Naive thymus-derived CD4-positive, alpha-beta T cell (primary cell): ENCODE measurements at regions of chr9 and their contacts with region 1.

Region 1: GRCh38 chr9:69745716-69746437 is 13.9 kb downstream of the PTAR1 start:
- DNase-seq: no peak
- ATAC-seq: peak; percentile 50
- H3K4me3 ChIP-seq: no peak overlapping the region
- H3K4me3 Mint-ChIP-seq: peak overlapping the region in 1 of 10 donors; percentile 15
- H3K27ac ChIP-seq: no peak overlapping the region
- H3K27ac Mint-ChIP-seq: peak overlapping the region in 6 of 9 donors; percentile 2 to 79 (median 40)
- H3K4me1 ChIP-seq: no peaks in the 10 kb centered on the region
- H3K4me1 Mint-ChIP-seq: peaks cover 28 to 71% (median 55%) of the 10 kb centered on the region in 7 donors
- H3K27me3 ChIP-seq: no peaks in the 10 kb centered on the region
- H3K27me3 Mint-ChIP-seq: no peaks in the 10 kb centered on the region

Region 2: DNA sequence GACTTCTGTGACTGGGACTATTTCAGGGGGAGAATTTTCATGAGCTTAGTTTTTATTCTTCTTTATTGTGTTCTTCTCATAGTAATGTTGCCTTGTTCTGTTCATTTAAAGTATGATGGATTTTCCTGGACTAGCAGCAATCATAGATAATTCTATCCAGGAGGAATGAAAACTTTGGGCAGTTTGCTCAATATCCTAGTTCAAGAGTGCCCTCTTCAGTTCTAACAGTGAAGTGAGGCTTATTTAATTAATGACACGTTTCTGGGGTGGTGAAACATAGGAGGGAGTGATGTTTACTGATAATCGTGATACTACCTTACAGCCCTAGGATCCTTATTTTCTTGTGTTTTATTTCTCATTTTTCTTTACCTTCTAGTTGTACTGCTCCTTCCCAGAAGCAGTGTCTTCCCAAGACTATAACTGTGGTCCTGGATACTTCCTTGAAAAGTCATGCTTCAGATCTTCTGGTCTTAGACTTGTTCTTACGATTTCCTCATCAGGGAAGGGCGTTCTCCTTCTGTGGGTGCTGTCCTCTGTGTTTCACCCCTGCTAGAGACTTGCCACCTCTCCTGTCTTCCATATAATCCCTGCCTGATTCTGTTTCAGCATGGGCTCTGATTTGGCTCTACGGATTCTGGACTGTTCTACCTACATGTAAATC is 132.1 kb after region 1 on chr9:
- CTCF ChIA-PET with region 1: no interaction called
- POLR2A ChIA-PET with region 1: no interaction called
- intact Hi-C with region 1: loop called (anchors 5 to 10 kb)
- DNase-seq: peak in 5 of 9 donors; percentile 2 to 25 (median 6)
- ATAC-seq: no peak
- H3K4me3 ChIP-seq: no peak overlapping the region
- H3K4me3 Mint-ChIP-seq: no peak overlapping the region
- H3K27ac ChIP-seq: no peak overlapping the region
- H3K27ac Mint-ChIP-seq: no peak overlapping the region
- H3K4me1 ChIP-seq: no peaks in the 10 kb centered on the region
- H3K4me1 Mint-ChIP-seq: no peaks in the 10 kb centered on the region
- H3K27me3 ChIP-seq: no peaks in the 10 kb centered on the region
- H3K27me3 Mint-ChIP-seq: peaks cover 0 to 37% (median 2%) of the 10 kb centered on the region in 5 donors

Region 3: GRCh38 chr9:69882998-69883565 is 137.2 kb after region 1 on chr9:
- CTCF ChIA-PET with region 1: no interaction called
- POLR2A ChIA-PET with region 1: no interaction called
- intact Hi-C with region 1: loop called (anchors 5 to 10 kb)
- DNase-seq: no peak
- ATAC-seq: no peak
- H3K4me3 ChIP-seq: no peak overlapping the region
- H3K4me3 Mint-ChIP-seq: no peak overlapping the region
- H3K27ac ChIP-seq: no peak overlapping the region
- H3K27ac Mint-ChIP-seq: no peak overlapping the region
- H3K4me1 ChIP-seq: no peaks in the 10 kb centered on the region
- H3K4me1 Mint-ChIP-seq: no peaks in the 10 kb centered on the region
- H3K27me3 ChIP-seq: no peaks in the 10 kb centered on the region
- H3K27me3 Mint-ChIP-seq: peaks cover 4 to 47% (median 23%) of the 10 kb centered on the region in 5 donors